ENCODE measurements at regions of chr4 and their contacts with region 1.

Region 1: DNA sequence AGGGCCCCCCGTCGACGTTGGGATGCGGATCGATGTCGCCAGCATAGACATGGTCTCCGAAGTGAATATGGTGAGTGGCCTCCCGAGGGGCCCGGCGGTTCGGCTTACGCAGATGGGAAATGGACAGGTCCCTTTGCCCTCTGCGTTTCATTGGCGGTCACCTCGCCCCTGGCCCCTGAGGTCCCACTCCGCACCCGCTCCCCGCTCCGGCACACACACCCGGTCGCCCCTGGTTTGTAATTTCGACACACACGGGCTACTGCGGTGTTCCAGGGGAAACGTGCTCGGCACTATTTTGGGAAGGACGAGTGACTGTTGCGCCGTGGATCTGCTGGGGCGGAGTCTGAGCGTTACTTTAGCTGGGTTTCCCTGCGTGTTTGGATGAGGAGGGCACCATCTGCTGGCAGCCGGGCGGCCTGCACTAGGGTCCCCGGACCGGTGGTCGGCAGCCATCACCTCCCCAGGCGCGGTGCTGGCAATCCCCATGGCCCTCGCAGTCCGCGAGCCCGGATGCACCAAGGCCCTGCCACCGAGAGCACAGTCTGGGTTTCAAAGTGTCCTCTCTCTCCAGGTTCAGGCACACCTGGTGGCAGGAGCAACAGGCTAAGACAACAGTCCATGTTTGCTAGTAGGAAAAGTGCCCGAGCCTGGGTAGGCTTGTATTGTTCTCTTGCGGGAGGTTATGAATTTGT is 1.2 kb downstream of the GABRB1 start:
- DNase-seq: peak; percentile 38
- H3K4me3 ChIP-seq: peak overlapping the region; percentile 2 to 74 (median 30)
- H3K27ac ChIP-seq: no peak overlapping the region
- H3K4me1 ChIP-seq: peaks cover 14% of the 10 kb centered on the region
- H3K27me3 ChIP-seq: peaks cover 11 to 32% of the 10 kb centered on the region in 2 experiments
- CTCF ChIP-seq: peak; percentile 80 to 96
- POLR2A ChIP-seq: no peak

Region 2: DNA sequence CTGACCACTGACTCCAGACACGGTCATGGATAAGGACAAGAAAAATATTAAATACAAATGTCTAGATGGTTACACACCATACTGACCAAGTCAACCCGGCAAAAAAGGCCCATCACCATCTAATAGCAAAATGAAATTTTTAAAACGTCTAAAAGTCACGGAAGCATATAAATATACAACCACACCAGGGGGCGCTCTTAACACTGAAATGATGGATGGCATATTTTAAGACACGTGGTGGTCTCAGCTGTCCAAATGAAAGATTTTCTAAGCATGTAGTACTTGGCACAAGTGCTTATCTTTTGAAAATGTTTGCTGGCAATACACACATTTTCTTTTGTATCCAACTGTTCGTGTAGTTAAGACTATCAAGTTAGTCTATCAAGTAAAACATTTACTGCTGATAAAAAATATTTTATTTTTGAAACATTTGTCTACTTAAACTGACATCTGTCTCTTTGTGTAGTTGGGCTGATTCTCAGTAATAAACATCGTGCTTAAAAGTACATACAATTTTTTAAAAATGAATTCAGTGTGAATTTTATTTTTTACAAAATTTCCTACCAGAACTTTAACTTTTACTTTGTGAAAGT is 188.1 kb before region 1 on chr4:
- CTCF ChIA-PET with region 1: interaction called, 11 read pairs
- POLR2A ChIA-PET with region 1: no interaction called
- dilution Hi-C with region 1: no loop called
- intact Hi-C with region 1: loop called (anchors 1 kb)
- DNase-seq: peak; percentile 64
- H3K4me3 ChIP-seq: no peak overlapping the region
- H3K27ac ChIP-seq: no peak overlapping the region
- H3K4me1 ChIP-seq: no peaks in the 10 kb centered on the region
- H3K27me3 ChIP-seq: no peaks in the 10 kb centered on the region
- CTCF ChIP-seq: peak; percentile 53 to 55
- POLR2A ChIP-seq: no peak

Region 3: DNA sequence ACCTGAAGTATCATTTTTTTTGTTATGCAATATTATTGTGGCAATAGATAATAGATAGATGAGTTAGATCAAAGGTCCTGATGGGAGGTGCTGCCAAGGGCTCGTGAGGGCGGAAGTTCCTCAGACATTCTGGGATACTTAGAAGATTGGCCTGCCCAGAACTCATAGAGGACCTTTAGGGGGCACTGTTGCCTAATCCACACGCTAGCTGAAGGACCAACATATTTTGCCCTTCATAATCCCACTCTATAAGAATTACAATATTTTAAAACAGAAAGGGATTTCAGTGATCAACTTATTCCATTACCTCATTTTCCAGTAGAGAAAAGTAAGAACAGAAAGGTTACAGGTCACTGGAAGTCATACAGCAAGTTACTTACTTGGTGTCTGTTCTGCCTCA is 100.6 kb before region 1 on chr4:
- CTCF ChIA-PET with region 1: interaction called, 8 read pairs
- POLR2A ChIA-PET with region 1: no interaction called
- dilution Hi-C with region 1: no loop called
- intact Hi-C with region 1: loop called (anchors 1 kb)
- DNase-seq: peak; percentile 35
- H3K4me3 ChIP-seq: no peak overlapping the region
- H3K27ac ChIP-seq: no peak overlapping the region
- H3K4me1 ChIP-seq: no peaks in the 10 kb centered on the region
- H3K27me3 ChIP-seq: peaks cover 0 to 9% of the 10 kb centered on the region in 2 experiments
- CTCF ChIP-seq: peak; percentile 47 to 65
- POLR2A ChIP-seq: no peak

Region 4: GRCh38 chr4:47075241-47075640 is 42.7 kb after region 1 on chr4:
- CTCF ChIA-PET with region 1: interaction called, 12 read pairs
- POLR2A ChIA-PET with region 1: no interaction called
- dilution Hi-C with region 1: no loop called
- intact Hi-C with region 1: no loop called
- DNase-seq: peak; percentile 54
- H3K4me3 ChIP-seq: no peak overlapping the region
- H3K27ac ChIP-seq: peak overlapping the region; percentile 51
- H3K4me1 ChIP-seq: peaks cover 37% of the 10 kb centered on the region
- H3K27me3 ChIP-seq: no peaks in the 10 kb centered on the region
- CTCF ChIP-seq: no peak
- POLR2A ChIP-seq: no peak